Activated CD4-positive, alpha-beta T cell treated with anti-CD3 and anti-CD28 coated beads, Interleukin-2, amount 10 ng/mL, durations not matched to agents 24 days and 14 days (primary cell): ENCODE measurements at regions of chr16 and their contacts with region 1.

Region 1: GRCh38 chr16:401468-402348 is at the start of gene DECR2:
- DNase-seq: peak; percentile 98
- H3K4me3 Mint-ChIP-seq: peak within 1 kb of the TSS; percentile 84
- H3K27ac Mint-ChIP-seq: peak within 1 kb of the TSS; percentile 84
- H3K4me1 Mint-ChIP-seq: peaks cover 11% of the 10 kb centered on the region
- H3K27me3 Mint-ChIP-seq: peaks cover 1% of the 10 kb centered on the region
- total RNA-seq, gene DECR2: 17.6 and 18.5 TPM in 2 replicates

Region 2: GRCh38 chr16:381789-382717 is 19.7 kb before region 1 on chr16 and contains the start of gene PGAP6:
- intact Hi-C with region 1: loop called (anchors 2 kb)
- DNase-seq: peak; percentile 92
- H3K4me3 Mint-ChIP-seq: peak within 1 kb of the TSS; percentile 84
- H3K27ac Mint-ChIP-seq: peak within 1 kb of the TSS; percentile 62
- H3K4me1 Mint-ChIP-seq: peaks cover 12% of the 10 kb centered on the region
- H3K27me3 Mint-ChIP-seq: peaks cover 4% of the 10 kb centered on the region
- total RNA-seq, gene PGAP6: 34.1 and 37.8 TPM in 2 replicates